ENCODE measurements at regions of chr6 and their contacts with region 1.

Region 1: DNA sequence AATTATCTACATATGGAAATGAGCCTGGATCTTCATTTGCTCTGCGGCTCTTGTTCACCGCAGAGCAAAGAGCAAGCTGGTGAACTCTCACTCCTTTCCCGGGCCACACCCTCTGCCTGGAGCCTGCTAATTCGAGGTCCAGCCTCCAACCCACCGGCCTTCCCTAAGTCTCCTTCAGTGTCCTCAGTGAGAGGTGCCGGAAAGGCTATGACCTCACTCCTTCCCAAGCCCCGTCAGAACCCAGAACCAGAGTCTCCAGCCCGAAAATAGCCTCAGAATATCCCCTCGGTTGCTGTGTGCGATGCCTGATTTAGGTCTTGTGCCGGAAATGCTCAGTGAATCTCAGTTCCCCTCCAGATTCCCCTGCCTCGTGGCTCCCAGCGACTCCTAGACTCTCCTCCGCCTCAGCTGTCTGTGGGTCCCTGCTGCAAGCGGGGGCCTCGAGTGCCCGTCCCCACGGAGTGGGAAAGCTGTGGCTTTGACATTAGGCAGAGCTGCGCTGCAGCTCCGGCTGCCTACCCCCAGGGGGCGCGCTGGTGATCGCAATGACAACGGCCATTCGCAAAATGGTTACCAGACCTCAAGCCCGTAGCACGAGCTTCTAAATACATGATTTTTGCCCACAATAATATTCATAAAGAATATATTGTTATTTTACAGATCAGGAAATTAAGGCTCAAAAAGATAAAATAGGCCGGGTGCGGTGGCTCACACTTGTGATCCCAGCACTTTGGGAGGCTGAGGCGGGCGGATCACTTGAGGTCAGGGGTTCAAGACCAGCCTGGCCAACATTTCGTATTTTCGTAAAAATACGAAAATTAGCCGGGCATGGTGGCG is 4.1 kb upstream of the BNIP5 start:
- DNase-seq: peak in 1 of 2 experiments; percentile 87
- H3K4me3 ChIP-seq: peak overlapping the region; percentile 2 to 53 (median 43); a peak in 7 of 8 replicates
- H3K27ac ChIP-seq: no peak overlapping the region
- H3K4me1 ChIP-seq: peaks cover 0 to 3% (median under 1%) of the 10 kb centered on the region in 4 experiments; a peak in 4 of 7 replicates
- H3K27me3 ChIP-seq: peaks cover 0 to 9% (median 3%) of the 10 kb centered on the region in 4 experiments; a peak in 3 of 7 replicates
- CTCF ChIP-seq: peak; percentile 85 to 98 (median 92)
- EP300 ChIP-seq: no peak
- POLR2A ChIP-seq: no peak
- RAD21 ChIP-seq: peak; percentile 49 to 64

Region 2: DNA sequence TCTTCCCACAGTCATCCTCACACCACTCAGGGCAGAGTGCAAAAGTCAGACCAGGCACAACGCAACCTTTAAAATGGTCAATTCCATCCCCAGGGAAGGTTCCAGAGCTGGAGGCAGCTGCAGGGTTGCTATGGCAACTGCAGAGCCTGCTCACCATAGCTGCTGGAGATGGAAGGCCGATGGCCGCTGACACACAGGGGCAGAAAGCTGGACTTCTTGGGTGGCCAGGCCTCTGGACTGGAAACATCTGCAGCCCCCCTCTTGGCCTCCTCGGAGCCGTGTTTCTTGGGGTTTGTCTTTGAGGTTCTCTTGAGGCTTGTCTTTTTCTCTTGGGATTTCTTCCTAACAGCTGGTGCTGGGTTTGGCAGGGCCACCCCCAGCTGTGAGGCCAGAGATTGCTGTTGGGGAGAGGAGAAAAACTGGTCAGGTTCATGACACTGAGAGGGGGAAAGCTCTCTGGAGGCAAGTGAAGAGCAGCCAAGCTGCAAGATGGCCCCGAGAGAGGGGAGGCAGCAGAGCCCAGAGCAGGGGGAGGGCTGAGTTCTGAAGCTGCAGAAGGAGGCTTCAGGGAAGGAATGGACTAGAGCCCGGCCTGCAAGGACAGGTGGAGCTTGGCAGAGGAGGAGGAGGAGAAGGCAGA is 14.4 kb before region 1 on chr6:
- CTCF ChIA-PET with region 1: interaction called, 19 read pairs
- POLR2A ChIA-PET with region 1: interaction called, 5 read pairs
- DNase-seq: no peak
- H3K4me3 ChIP-seq: no peak overlapping the region
- H3K27ac ChIP-seq: no peak overlapping the region
- H3K4me1 ChIP-seq: peaks cover 0 to 16% (median 5%) of the 10 kb centered on the region in 4 experiments; a peak in 5 of 7 replicates
- H3K27me3 ChIP-seq: no peaks in the 10 kb centered on the region; a peak in 1 of 7 replicates
- CTCF ChIP-seq: no peak
- EP300 ChIP-seq: no peak
- POLR2A ChIP-seq: no peak
- RAD21 ChIP-seq: no peak

Region 3: DNA sequence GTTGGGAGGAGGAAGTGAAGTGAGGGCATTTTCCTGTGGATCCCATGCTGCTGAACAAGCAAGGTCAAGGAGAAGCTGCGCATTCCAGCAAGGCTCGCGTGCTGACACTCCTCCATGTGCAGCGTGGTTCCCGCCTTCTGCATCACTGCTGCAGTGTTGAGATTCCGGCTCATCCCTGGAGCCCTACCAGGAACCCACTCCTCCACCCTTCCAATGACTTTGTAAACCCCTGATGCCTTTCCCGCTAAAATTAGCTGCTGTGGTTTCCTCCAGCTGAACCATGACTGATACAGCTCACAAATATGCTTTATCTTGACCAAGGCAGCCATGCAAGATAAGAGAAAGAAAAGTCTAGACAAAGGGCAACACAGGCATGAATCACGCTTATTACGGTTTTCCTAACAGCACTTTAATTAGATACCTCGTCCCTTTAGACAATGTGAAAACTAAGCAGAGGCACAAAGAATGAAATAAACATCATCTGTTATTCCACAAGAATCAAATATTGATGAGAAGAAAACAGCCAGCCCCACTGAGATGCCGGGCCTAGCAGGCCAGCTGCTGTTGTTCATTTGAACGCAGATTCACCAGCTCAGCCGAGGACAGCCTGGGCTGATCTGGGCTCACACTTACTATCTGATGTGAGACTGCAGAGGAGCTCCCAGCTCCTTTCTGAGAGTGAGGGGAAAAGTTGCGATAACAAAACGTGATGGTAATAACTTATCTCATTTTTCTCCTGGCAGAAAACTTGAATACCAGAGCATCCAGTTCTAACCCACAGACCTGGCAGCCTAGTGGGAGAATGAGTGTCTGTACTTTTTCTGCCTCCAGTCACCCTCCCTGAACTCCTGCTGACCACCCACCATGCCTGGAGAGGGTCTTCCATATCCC is 10.1 kb after region 1 on chr6:
- CTCF ChIA-PET with region 1: interaction called, 47 read pairs
- POLR2A ChIA-PET with region 1: interaction called, 3 read pairs
- DNase-seq: no peak
- H3K4me3 ChIP-seq: no peak overlapping the region
- H3K27ac ChIP-seq: no peak overlapping the region
- H3K4me1 ChIP-seq: no peaks in the 10 kb centered on the region
- H3K27me3 ChIP-seq: no peaks in the 10 kb centered on the region
- CTCF ChIP-seq: no peak
- EP300 ChIP-seq: no peak
- POLR2A ChIP-seq: no peak
- RAD21 ChIP-seq: no peak

Measured in H1 (cell line).